CD8-positive, alpha-beta T cell (primary cell): ENCODE measurements at regions of chr9 and their contacts with region 1.

Region 1: DNA sequence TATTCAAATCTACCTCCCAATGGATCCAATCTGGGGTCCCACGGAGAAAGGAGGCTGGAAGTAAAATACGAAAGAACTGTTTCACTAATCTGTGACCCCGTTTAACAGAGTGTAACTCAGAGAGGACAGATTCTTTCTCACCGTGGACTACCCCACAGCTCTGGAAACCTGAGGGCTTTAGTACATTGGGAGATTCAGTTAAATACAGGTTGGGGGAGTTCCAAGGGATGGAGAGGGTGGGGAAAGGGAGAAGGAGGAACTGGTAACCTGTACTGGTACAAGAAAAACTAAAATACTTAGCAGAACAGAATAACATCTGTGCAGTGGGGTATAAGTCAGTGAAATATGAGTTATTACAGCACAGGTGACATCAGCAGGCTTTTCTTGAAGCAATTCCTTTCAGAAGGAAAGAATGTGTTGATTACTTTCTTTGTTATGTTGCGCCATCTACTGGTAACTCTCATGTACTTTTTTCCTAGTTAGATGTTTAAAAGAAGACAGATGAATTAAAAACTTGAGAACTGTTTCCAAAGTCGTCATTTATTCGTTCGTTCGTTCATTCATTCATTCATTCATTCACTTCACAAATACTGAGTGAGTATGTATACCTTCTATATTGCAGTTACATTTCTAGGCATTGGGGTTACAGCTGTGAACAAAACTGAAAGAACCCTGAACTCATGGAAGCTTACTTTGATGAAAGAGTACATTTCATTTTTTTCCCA is 30.0 kb upstream of the STOM start:
- DNase-seq: peak in 3 of 9 experiments; percentile 8 to 80 (median 72)
- ATAC-seq: peak; percentile 42
- H3K4me3 ChIP-seq: no peak overlapping the region
- H3K4me3 Mint-ChIP-seq: no peak overlapping the region
- H3K27ac ChIP-seq: no peak overlapping the region
- H3K27ac Mint-ChIP-seq: no peak overlapping the region
- H3K4me1 ChIP-seq: no peaks in the 10 kb centered on the region
- H3K4me1 Mint-ChIP-seq: no peaks in the 10 kb centered on the region
- H3K27me3 ChIP-seq: no peaks in the 10 kb centered on the region
- H3K27me3 Mint-ChIP-seq: peaks cover 3% of the 10 kb centered on the region
- CTCF ChIP-seq: peak; percentile 92

Region 2: GRCh38 chr9:120985810-120986222 is 414.2 kb before region 1 on chr9:
- CTCF ChIA-PET with region 1: no interaction called
- POLR2A ChIA-PET with region 1: no interaction called
- intact Hi-C with region 1: loop called in 1 of 2 experiments (anchors 5 kb)
- DNase-seq: peak in 1 of 9 experiments; percentile 12
- ATAC-seq: no peak
- H3K4me3 ChIP-seq: no peak overlapping the region
- H3K4me3 Mint-ChIP-seq: no peak overlapping the region
- H3K27ac ChIP-seq: no peak overlapping the region
- H3K27ac Mint-ChIP-seq: no peak overlapping the region
- H3K4me1 ChIP-seq: no peaks in the 10 kb centered on the region
- H3K4me1 Mint-ChIP-seq: peaks cover 5% of the 10 kb centered on the region
- H3K27me3 ChIP-seq: no peaks in the 10 kb centered on the region
- H3K27me3 Mint-ChIP-seq: no peaks in the 10 kb centered on the region
- CTCF ChIP-seq: no peak

Region 3: GRCh38 chr9:121213136-121213806 is 186.8 kb before region 1 on chr9:
- CTCF ChIA-PET with region 1: interaction called, 14 read pairs
- POLR2A ChIA-PET with region 1: no interaction called
- intact Hi-C with region 1: loop called (anchors 1 to 2 kb)
- DNase-seq: peak; percentile 27 to 75 (median 62)
- ATAC-seq: peak; percentile 52
- H3K4me3 ChIP-seq: no peak overlapping the region
- H3K4me3 Mint-ChIP-seq: no peak overlapping the region
- H3K27ac ChIP-seq: no peak overlapping the region
- H3K27ac Mint-ChIP-seq: no peak overlapping the region
- H3K4me1 ChIP-seq: no peaks in the 10 kb centered on the region
- H3K4me1 Mint-ChIP-seq: peaks cover 5% of the 10 kb centered on the region
- H3K27me3 ChIP-seq: no peaks in the 10 kb centered on the region
- H3K27me3 Mint-ChIP-seq: no peaks in the 10 kb centered on the region
- CTCF ChIP-seq: peak; percentile 89

Region 4: DNA sequence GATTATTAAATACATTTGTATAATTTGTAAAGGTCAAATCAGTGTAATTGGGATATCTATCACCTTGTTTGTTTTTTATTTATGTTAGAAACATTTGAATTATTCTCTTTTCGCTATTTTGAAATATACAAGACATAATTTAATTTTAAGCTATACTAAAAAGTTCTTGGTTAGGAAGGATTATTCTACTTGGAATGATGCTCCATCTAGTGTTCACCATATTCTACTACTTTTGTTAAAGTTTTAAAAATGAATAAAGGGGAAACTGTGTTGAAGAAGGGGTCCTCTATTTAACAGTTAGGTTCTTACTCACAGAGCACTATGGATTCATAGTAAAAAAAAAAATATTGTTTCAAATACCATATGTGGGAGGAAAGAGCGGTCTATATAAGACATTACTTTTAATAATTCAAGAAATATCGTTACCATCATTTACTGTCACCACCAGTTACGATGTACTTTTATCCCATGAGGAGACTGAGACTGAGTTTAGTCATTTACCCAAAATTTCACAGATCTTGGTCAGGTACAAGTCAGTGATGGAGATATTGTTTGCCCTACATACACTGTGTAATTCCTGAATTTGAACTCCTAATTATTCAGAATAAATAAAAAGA is 23.7 kb before region 1 on chr9:
- CTCF ChIA-PET with region 1: interaction called, 10 read pairs
- POLR2A ChIA-PET with region 1: no interaction called
- intact Hi-C with region 1: loop called (anchors 1 to 2 kb)
- DNase-seq: peak in 2 of 9 experiments; percentile 43 to 60
- ATAC-seq: no peak
- H3K4me3 ChIP-seq: no peak overlapping the region
- H3K4me3 Mint-ChIP-seq: no peak overlapping the region
- H3K27ac ChIP-seq: no peak overlapping the region
- H3K27ac Mint-ChIP-seq: no peak overlapping the region
- H3K4me1 ChIP-seq: no peaks in the 10 kb centered on the region
- H3K4me1 Mint-ChIP-seq: peaks cover 22% of the 10 kb centered on the region
- H3K27me3 ChIP-seq: no peaks in the 10 kb centered on the region
- H3K27me3 Mint-ChIP-seq: no peaks in the 10 kb centered on the region
- CTCF ChIP-seq: peak; percentile 61

Region 5: DNA sequence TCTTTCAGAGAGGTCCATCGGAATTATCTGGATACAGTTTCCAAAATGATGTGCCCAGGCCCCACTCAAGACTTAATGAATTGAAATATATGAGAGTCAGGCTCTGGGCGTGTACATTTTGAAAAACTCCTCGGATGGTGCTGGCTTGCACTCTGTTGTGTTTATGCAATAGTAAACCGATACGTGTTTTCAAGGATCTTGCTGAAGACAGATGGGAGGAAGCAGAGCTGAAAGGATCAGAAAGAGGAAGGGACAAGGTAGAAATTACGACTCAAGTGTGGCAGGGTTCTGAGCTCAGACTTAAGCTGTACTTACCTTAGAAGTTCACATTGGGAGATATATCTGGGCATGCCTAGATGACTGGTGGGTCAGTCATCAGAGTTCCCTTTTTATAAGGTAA is 16.3 kb before region 1 on chr9:
- CTCF ChIA-PET with region 1: interaction called, 13 read pairs
- POLR2A ChIA-PET with region 1: no interaction called
- intact Hi-C with region 1: no loop called
- DNase-seq: no peak
- ATAC-seq: no peak
- H3K4me3 ChIP-seq: no peak overlapping the region
- H3K4me3 Mint-ChIP-seq: no peak overlapping the region
- H3K27ac ChIP-seq: no peak overlapping the region
- H3K27ac Mint-ChIP-seq: no peak overlapping the region
- H3K4me1 ChIP-seq: no peaks in the 10 kb centered on the region
- H3K4me1 Mint-ChIP-seq: no peaks in the 10 kb centered on the region
- H3K27me3 ChIP-seq: no peaks in the 10 kb centered on the region
- H3K27me3 Mint-ChIP-seq: no peaks in the 10 kb centered on the region
- CTCF ChIP-seq: no peak

Region 6: DNA sequence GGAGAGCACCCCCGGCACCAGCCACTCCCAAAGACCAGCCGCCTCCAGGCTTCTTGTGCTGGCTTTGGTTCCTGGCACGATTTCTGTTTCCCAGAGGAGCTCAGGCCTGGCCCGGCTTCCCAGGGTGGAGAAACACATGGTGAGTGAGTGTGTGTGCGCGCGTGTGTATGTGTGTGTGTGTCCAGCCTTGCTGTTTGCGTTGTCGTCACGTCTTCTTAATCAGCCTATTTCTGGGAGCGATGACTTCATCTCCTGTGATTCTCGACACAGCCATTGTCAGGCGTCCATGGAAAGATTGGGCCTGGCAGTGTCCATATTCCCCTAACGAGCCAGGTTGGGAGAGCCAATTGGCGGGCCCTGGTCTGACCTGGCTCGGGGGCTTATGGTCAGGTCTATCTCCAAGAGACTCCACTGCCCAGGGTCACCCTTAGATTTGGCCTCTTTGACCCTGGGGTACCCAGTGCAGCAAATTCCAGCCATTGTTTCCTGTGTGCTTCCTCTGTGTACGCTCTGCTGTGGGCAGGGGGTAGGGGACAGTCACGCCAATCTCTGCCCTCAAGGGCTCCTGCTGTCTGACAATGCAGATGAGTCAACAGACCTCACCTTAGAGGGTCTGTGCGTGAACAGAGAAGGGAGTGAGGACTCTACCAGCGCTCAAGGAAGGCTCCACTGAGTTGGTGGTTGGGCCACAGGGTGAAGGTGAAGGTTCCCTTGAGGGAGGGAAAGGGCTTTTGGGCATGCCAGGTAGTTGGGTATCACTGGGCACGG is 325.1 kb after region 1 on chr9:
- CTCF ChIA-PET with region 1: no interaction called
- POLR2A ChIA-PET with region 1: no interaction called
- intact Hi-C with region 1: no loop called
- DNase-seq: no peak
- ATAC-seq: no peak
- H3K4me3 ChIP-seq: no peak overlapping the region
- H3K4me3 Mint-ChIP-seq: no peak overlapping the region
- H3K27ac ChIP-seq: no peak overlapping the region
- H3K27ac Mint-ChIP-seq: no peak overlapping the region
- H3K4me1 ChIP-seq: no peaks in the 10 kb centered on the region
- H3K4me1 Mint-ChIP-seq: no peaks in the 10 kb centered on the region
- H3K27me3 ChIP-seq: no peaks in the 10 kb centered on the region
- H3K27me3 Mint-ChIP-seq: no peaks in the 10 kb centered on the region
- CTCF ChIP-seq: no peak